ENCODE measurements at regions of chrX and their contacts with region 1.

Region 1: DNA sequence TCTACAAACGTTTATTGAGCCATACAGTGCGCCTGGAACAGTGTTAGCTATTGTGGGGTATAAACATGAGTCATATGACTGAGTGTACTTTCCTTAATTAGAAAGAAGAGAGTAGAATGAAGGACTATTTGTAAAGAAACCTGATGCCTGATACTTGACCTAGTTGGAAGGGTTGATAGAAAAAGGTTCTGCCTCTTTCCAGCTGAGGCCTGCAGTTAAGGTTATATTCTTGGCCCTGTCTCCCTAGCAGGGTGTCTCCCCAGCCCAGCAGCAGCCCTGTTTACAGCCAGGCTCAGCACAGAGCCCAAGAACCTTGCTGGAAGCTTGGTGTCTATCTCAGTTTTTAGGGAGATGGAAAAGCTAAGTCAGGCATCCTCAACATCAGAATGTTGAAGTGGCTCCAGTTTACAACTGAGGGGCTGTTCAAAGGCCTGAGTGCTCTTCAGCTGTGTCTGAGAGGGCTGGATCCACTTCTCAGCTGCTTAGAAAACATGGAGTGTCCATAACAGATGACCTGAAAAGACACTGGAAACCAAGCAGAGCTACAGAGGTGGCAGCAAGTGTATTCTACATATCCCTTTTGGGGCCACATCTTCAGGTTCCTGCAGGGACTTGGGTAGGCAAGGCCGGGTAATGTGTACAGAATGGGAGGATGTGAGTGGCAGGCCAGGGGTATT is 21.6 kb downstream of the NYX start:
- DNase-seq: no peak
- H3K4me3 ChIP-seq: no peak overlapping the region
- H3K27ac ChIP-seq: no peak overlapping the region
- H3K4me1 ChIP-seq: no peaks in the 10 kb centered on the region
- H3K27me3 ChIP-seq: no peaks in the 10 kb centered on the region
- CTCF ChIP-seq: no peak
- POLR2A ChIP-seq: no peak

Region 2: GRCh38 chrX:41759817-41760216 is 291.0 kb after region 1 on chrX:
- intact Hi-C with region 1: loop called (anchors 10 kb)
- DNase-seq: no peak
- H3K4me3 ChIP-seq: no peak overlapping the region
- H3K27ac ChIP-seq: no peak overlapping the region
- H3K4me1 ChIP-seq: no peaks in the 10 kb centered on the region
- H3K27me3 ChIP-seq: no peaks in the 10 kb centered on the region
- CTCF ChIP-seq: peak in 1 of 3 experiments; percentile 13
- POLR2A ChIP-seq: no peak

Measured in vagina (tissue), 2 donors.